B cell (primary cell): ENCODE measurements at regions of chr16 and their contacts with region 1.

Region 1: DNA sequence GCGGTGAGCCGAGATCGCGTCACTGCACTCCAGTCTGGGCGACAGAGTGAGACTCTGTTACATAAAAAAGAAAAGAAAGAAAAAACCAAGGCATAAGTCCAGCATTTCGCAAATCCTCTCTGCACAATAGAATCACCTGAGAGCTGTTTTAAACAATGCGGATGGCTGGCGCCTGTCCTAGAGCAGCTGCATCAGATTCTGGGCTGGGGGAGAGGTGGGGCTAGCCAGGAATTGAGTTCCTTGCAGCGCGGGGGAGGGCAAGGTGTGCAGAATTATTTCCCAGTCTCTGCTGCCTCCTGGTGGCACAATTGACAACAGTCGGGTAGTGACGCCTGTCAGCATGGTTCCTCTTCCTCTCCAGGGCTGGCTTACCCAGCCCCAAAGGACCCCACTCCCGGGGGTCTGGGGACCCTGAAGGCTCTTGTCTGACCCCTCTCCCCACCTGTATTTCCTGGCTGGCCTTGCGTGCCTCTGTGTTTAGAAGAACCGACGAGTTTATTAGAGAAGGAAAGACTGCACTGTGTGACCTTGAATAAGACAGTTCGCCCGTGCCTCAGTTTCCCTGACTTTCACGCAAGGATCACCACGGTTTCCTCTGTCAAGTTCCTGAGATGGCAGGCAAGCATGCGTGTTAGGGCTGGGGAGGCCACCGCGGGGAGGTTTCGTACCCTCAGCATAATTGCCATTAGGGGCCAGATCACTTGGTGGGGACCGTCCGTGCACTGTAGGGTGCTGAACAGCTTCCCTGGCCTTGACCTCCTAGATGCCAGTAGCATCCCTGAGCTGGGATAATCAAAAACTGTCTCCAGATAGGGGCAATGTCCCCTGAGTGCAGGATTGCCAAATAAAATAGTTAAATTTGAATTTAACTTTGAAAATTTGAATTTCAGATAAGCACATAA is 41.0 kb upstream of the PLCG2 start:
- DNase-seq: peak; percentile 91
- ATAC-seq: peak; percentile 64
- H3K4me3 ChIP-seq: peak overlapping the region; percentile 11 to 59 (median 39)
- H3K4me3 Mint-ChIP-seq: peak overlapping the region; percentile 83
- H3K27ac ChIP-seq: peak overlapping the region; percentile 70 to 88
- H3K27ac Mint-ChIP-seq: peak overlapping the region; percentile 92
- H3K4me1 ChIP-seq: peaks cover 42 to 54% of the 10 kb centered on the region in 2 donors
- H3K4me1 Mint-ChIP-seq: peaks cover 50% of the 10 kb centered on the region
- H3K27me3 ChIP-seq: no peaks in the 10 kb centered on the region
- H3K27me3 Mint-ChIP-seq: no peaks in the 10 kb centered on the region
- CTCF ChIP-seq: peak; percentile 94

Region 2: GRCh38 chr16:81035398-81035974 is 702.6 kb before region 1 on chr16 and contains the start of gene ATMIN:
- CTCF ChIA-PET with region 1: interaction called, 5 read pairs
- POLR2A ChIA-PET with region 1: no interaction called
- intact Hi-C with region 1: loop called (anchors 2 kb)
- DNase-seq: peak; percentile 93
- ATAC-seq: peak; percentile 97
- H3K4me3 ChIP-seq: peak within 1 kb of the TSS; percentile 49 to 76 (median 66)
- H3K4me3 Mint-ChIP-seq: peak within 1 kb of the TSS; percentile 86
- H3K27ac ChIP-seq: peak within 1 kb of the TSS in 1 of 2 donors; percentile 40
- H3K27ac Mint-ChIP-seq: peak within 1 kb of the TSS; percentile 66
- H3K4me1 ChIP-seq: peaks cover 14 to 16% of the 10 kb centered on the region in 2 donors
- H3K4me1 Mint-ChIP-seq: peaks cover 22% of the 10 kb centered on the region
- H3K27me3 ChIP-seq: no peaks in the 10 kb centered on the region
- H3K27me3 Mint-ChIP-seq: no peaks in the 10 kb centered on the region
- CTCF ChIP-seq: peak; percentile 97
- total RNA-seq, gene ATMIN: 31.5 and 33.7 TPM in 2 replicates

Region 3: GRCh38 chr16:81204798-81205680 is 533.1 kb before region 1 on chr16:
- CTCF ChIA-PET with region 1: interaction called, 17 read pairs
- POLR2A ChIA-PET with region 1: no interaction called
- intact Hi-C with region 1: no loop called
- DNase-seq: peak; percentile 59
- ATAC-seq: no peak
- H3K4me3 ChIP-seq: no peak overlapping the region
- H3K4me3 Mint-ChIP-seq: no peak overlapping the region
- H3K27ac ChIP-seq: no peak overlapping the region
- H3K27ac Mint-ChIP-seq: no peak overlapping the region
- H3K4me1 ChIP-seq: no peaks in the 10 kb centered on the region
- H3K4me1 Mint-ChIP-seq: no peaks in the 10 kb centered on the region
- H3K27me3 ChIP-seq: peaks cover 0 to 2% (median 0%) of the 10 kb centered on the region in 4 experiments
- H3K27me3 Mint-ChIP-seq: peaks cover 19% of the 10 kb centered on the region
- CTCF ChIP-seq: peak; percentile 72

Region 4: DNA sequence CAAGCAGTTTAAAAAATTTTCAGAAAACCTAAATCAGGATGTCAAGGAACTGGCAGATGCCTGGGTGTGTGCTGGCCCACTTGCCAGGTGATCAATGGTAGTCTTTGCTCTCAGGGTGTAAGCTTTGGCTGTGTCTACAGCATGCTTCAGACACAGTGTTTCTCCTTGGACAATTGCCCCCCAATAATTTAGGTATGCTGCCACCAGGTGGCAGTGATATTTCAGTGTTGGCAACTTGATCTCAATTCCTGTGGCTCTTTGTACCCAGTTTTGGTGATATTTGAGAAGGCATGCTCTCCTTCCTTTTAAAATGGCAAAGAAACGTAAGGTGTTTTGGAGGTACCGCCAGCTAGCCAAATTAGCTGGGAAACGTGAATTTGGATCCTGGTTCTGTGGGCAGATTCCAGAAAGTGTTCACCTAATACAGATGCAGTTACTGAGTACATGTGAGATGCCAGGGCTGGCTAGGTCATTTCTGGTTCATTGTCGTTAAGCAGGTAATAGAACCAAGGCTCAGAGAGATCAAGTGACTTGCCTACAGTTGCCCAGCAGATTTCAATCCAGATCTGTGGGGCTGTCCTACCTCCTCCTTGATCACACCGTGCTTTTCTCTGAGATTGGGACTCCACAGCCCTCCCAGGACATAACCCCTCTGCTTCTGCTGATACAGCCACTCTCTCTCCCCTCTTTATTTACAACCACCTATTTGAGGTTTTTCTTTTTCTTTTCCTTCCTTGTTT is 114.6 kb before region 1 on chr16:
- CTCF ChIA-PET with region 1: interaction called, 3 read pairs
- POLR2A ChIA-PET with region 1: no interaction called
- intact Hi-C with region 1: loop called (anchors 1 kb)
- DNase-seq: peak; percentile 70
- ATAC-seq: peak; percentile 34
- H3K4me3 ChIP-seq: no peak overlapping the region
- H3K4me3 Mint-ChIP-seq: no peak overlapping the region
- H3K27ac ChIP-seq: no peak overlapping the region
- H3K27ac Mint-ChIP-seq: no peak overlapping the region
- H3K4me1 ChIP-seq: peaks cover 5 to 11% of the 10 kb centered on the region in 2 donors
- H3K4me1 Mint-ChIP-seq: peaks cover 16% of the 10 kb centered on the region
- H3K27me3 ChIP-seq: no peaks in the 10 kb centered on the region
- H3K27me3 Mint-ChIP-seq: no peaks in the 10 kb centered on the region
- CTCF ChIP-seq: peak; percentile 65

Region 5: GRCh38 chr16:81778861-81779535 is 40.9 kb after region 1 on chr16 and contains the start of gene PLCG2:
- CTCF ChIA-PET with region 1: interaction called, 21 read pairs
- POLR2A ChIA-PET with region 1: interaction called, 7 read pairs
- intact Hi-C with region 1: loop called (anchors 1 kb)
- DNase-seq: peak; percentile 91
- ATAC-seq: peak; percentile 85
- H3K4me3 ChIP-seq: peak within 1 kb of the TSS; percentile 81 to 90 (median 83)
- H3K4me3 Mint-ChIP-seq: peak within 1 kb of the TSS; percentile 99
- H3K27ac ChIP-seq: peak within 1 kb of the TSS; percentile 72 to 91
- H3K27ac Mint-ChIP-seq: peak within 1 kb of the TSS; percentile 95
- H3K4me1 ChIP-seq: peaks cover 59 to 67% of the 10 kb centered on the region in 2 donors
- H3K4me1 Mint-ChIP-seq: peaks cover 72% of the 10 kb centered on the region
- H3K27me3 ChIP-seq: no peaks in the 10 kb centered on the region
- H3K27me3 Mint-ChIP-seq: no peaks in the 10 kb centered on the region
- CTCF ChIP-seq: no peak
- total RNA-seq, gene PLCG2: 812 and 852 TPM in 2 replicates

Region 6: DNA sequence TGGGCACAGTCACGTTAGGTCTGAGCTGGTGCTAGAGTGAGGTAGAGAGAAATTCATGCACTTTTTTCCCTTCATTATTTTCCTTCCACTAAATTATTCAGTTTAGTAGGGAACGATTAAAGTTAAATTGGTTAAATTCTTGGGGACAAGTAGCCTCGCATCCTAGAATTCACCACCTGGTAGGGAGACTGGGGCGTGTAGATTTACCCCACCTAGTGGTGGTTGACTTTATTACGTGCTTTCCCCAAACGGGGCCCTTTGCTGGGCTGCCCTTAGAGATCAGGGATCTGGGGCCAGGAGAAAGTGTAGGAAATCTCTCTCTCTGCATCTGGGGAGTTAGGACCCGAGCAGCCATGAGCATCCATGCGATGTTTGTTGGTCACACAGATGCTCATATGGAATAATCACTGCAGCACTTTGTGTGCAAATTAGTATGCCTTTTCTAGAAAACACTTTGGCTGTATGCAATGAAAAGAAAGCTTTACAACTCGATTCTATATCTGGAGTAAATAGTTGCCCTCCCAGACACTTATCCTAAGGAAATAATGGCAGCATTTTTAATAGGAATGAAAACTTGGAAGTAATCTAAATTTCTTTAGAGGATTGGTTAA is 147.9 kb after region 1 on chr16:
- CTCF ChIA-PET with region 1: interaction called, 5 read pairs
- POLR2A ChIA-PET with region 1: interaction called, 15 read pairs
- intact Hi-C with region 1: no loop called
- DNase-seq: peak; percentile 59
- ATAC-seq: peak; percentile 74
- H3K4me3 ChIP-seq: no peak overlapping the region
- H3K4me3 Mint-ChIP-seq: no peak overlapping the region
- H3K27ac ChIP-seq: peak overlapping the region in 1 of 2 donors; percentile 32
- H3K27ac Mint-ChIP-seq: peak overlapping the region; percentile 7
- H3K4me1 ChIP-seq: no peaks in the 10 kb centered on the region
- H3K4me1 Mint-ChIP-seq: peaks cover 2% of the 10 kb centered on the region
- H3K27me3 ChIP-seq: no peaks in the 10 kb centered on the region
- H3K27me3 Mint-ChIP-seq: no peaks in the 10 kb centered on the region
- CTCF ChIP-seq: peak; percentile 93